ENCODE measurements at regions of chr19 and their contacts with region 1.

Region 1: GRCh38 chr19:40633207-40633606 is 32.0 kb downstream of the LTBP4 start:
- DNase-seq: no peak
- ATAC-seq: no peak
- H3K4me3 Mint-ChIP-seq: no peak overlapping the region
- H3K27ac Mint-ChIP-seq: no peak overlapping the region
- H3K4me1 Mint-ChIP-seq: peaks cover 15% of the 10 kb centered on the region
- H3K27me3 Mint-ChIP-seq: peaks cover 5% of the 10 kb centered on the region

Region 2: GRCh38 chr19:40305403-40305802 is 327.8 kb before region 1 on chr19:
- CTCF ChIA-PET with region 1: interaction called, 23 read pairs
- POLR2A ChIA-PET with region 1: no interaction called
- intact Hi-C with region 1: loop called in 1 of 2 experiments (anchors 1 kb)
- DNase-seq: peak; percentile 90
- ATAC-seq: peak; percentile 83
- H3K4me3 Mint-ChIP-seq: no peak overlapping the region
- H3K27ac Mint-ChIP-seq: no peak overlapping the region
- H3K4me1 Mint-ChIP-seq: no peaks in the 10 kb centered on the region
- H3K27me3 Mint-ChIP-seq: no peaks in the 10 kb centered on the region

Region 3: DNA sequence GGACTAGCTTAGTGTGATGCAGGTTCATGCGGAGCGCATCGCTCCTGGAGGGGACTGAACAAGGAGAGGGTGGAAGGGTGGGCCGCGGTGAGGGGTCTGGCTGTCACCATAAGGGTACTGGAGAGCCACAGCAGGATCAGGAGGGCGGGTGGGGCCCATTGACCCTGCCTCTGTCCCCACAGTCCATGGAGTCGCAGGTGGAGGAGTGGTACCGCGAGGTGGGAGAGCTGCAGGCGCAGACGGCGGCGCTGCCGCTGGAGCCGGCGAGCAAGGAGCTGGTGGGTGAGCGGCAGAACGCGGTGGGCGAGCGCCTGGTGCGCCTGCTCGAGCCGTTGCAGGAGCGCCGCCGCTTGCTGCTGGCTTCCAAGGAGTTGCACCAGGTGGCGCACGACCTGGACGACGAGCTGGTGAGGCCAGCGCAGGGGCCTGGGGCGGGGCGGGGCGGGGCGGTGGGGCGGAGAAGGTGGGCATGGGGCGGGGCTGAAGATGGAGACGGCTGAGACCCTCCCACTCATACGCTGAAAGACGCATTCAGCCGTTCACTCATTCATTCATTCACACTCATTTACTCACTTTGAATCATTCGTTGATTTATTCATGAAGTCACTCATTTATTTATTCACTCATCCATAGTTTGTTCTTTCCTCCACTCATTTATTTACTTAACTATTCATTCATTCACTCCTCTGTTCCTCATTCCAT is 84.0 kb before region 1 on chr19:
- CTCF ChIA-PET with region 1: interaction called, 17 read pairs
- POLR2A ChIA-PET with region 1: no interaction called
- intact Hi-C with region 1: loop called in 1 of 2 experiments (anchors 1 kb)
- DNase-seq: peak; percentile 90
- ATAC-seq: peak; percentile 95
- H3K4me3 Mint-ChIP-seq: no peak overlapping the region
- H3K27ac Mint-ChIP-seq: no peak overlapping the region
- H3K4me1 Mint-ChIP-seq: peaks cover 10% of the 10 kb centered on the region
- H3K27me3 Mint-ChIP-seq: peaks cover 37% of the 10 kb centered on the region

Region 4: DNA sequence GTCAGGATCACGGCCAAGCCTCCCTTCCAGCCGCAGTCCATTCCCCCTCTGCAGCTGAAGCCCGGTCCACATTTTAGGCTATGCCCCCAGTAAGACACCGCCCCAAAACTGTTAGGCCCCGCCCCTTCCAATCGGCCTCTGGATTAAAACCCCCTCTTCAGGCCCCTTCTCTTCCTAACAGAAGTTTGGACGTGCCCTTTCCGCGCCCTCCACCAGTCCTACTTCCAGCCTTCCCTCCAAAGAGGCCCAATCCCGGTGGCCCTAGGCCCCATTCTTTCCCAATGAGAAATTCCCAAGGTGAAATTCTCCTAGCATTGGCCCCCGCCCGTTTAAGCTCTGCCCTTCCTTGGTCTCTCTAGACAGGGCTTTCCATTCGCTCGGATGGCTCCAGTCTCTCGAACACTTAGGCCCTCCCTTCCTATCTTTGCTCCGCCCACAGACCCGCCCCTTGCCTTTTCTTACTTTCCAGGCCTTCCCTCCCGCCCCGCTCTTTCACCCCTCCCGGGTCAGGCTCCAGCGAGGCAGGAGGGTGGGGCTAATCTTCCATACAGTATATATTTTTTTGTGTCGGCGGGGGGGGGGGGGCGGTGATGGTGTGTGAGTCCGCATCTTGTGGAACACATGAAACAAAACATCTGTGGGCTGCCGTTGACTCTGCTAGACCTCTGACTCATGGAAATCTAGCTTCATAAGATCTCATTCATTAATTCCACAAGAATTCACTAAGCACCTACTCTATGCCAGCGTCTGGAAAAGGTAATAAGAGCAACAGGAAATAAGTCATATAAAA is 18.4 kb before region 1 on chr19:
- CTCF ChIA-PET with region 1: interaction called, 15 read pairs
- POLR2A ChIA-PET with region 1: interaction called, 13 read pairs
- intact Hi-C with region 1: loop called in 1 of 2 experiments (anchors 1 kb)
- DNase-seq: peak; percentile 98
- ATAC-seq: peak; percentile 55
- H3K4me3 Mint-ChIP-seq: peak overlapping the region; percentile 99
- H3K27ac Mint-ChIP-seq: peak overlapping the region; percentile 100
- H3K4me1 Mint-ChIP-seq: peaks cover 58% of the 10 kb centered on the region
- H3K27me3 Mint-ChIP-seq: no peaks in the 10 kb centered on the region

Region 5: GRCh38 chr19:40646564-40647254 is 13.5 kb after region 1 on chr19:
- CTCF ChIA-PET with region 1: interaction called, 40 read pairs
- POLR2A ChIA-PET with region 1: no interaction called
- intact Hi-C with region 1: no loop called
- DNase-seq: no peak
- ATAC-seq: no peak
- H3K4me3 Mint-ChIP-seq: no peak overlapping the region
- H3K27ac Mint-ChIP-seq: no peak overlapping the region
- H3K4me1 Mint-ChIP-seq: no peaks in the 10 kb centered on the region
- H3K27me3 Mint-ChIP-seq: peaks cover 6% of the 10 kb centered on the region

Region 6: GRCh38 chr19:40806488-40807468 is 173.6 kb after region 1 on chr19:
- CTCF ChIA-PET with region 1: interaction called, 10 read pairs
- POLR2A ChIA-PET with region 1: no interaction called
- intact Hi-C with region 1: no loop called
- DNase-seq: peak; percentile 90
- ATAC-seq: peak; percentile 51
- H3K4me3 Mint-ChIP-seq: peak overlapping the region; percentile 55
- H3K27ac Mint-ChIP-seq: peak overlapping the region; percentile 89
- H3K4me1 Mint-ChIP-seq: peaks cover 72% of the 10 kb centered on the region
- H3K27me3 Mint-ChIP-seq: no peaks in the 10 kb centered on the region

Measured in activated CD4-positive, alpha-beta T cell treated with anti-CD3 and anti-CD28 coated beads for 36 hours (primary cell).